Dorsolateral prefrontal cortex (tissue), 120 donors: ENCODE measurements at regions of chr19 and their contacts with region 1.

Region 1: DNA sequence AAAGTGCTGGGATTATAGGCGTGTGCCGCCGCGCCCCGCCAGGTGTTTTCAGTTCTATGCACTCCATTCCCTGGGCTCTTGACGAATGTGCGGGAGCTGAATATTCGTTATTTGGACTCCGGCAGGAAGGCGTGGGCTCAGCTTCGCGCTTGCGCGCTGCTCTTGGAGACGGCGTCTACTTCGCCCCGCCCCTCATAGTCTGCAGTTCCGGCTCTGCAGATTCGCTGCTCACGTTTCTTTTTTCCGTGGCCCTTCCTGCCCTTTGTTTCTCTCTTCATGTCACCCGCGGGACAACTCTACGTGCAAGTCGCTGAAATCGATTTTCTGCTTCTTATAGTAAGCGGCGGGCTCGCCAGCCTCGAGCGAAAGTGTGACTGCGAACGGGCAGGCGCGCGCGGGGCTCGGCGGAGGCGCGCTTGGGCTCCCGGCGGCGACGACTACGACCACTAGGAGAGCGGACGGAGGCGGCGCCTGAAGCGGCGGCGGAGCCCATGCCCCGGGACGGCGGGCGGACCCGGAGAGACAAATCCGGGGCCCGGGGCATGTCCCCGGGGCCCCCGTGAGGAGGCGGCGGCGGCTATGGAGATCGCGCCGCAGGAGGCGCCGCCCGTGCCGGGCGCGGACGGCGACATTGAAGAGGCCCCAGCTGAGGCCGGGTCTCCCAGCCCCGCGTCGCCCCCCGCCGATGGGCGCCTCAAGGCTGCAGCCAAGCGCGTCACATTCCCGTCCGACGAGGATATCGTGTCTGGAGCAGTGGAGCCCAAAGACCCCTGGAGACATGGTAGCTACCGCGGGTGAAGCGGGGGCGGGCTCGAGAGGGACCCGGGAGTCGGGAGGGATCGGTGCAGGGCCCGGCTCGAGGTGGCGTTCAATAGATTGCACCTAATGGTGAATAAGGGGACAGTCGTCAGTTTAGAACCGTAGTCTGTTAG is at the start of gene PPP1R37:
- DNase-seq: peak; percentile 89 to 95 (median 92)
- H3K4me3 ChIP-seq: peak within 1 kb of the TSS; percentile 70 to 100 (median 98)
- H3K27ac ChIP-seq: peak within 1 kb of the TSS; percentile 75 to 99 (median 93)
- H3K27me3 ChIP-seq: no peaks in the 10 kb centered on the region
- CTCF ChIP-seq: peak in 46 of 56 donors; percentile 14 to 66 (median 38)
- total RNA-seq, gene PPP1R37: 33.6 to 77.3 (median 54.0) TPM

Region 2: GRCh38 chr19:44890366-44891015 is 202.5 kb before region 1 on chr19:
- intact Hi-C with region 1: loop called in 1 of 2 experiments (anchors 2 kb)
- DNase-seq: peak in 7 of 10 donors; percentile 99 to 100 (median 100)
- H3K4me3 ChIP-seq: peak overlapping the region; percentile 51 to 99 (median 74)
- H3K27ac ChIP-seq: peak overlapping the region; percentile 58 to 99 (median 93)
- H3K27me3 ChIP-seq: no peaks in the 10 kb centered on the region
- CTCF ChIP-seq: peak in 20 of 56 donors; percentile 7 to 42 (median 24)

Region 3: GRCh38 chr19:45125926-45126493 is 33.0 kb after region 1 on chr19:
- intact Hi-C with region 1: loop called (anchors 2 to 5 kb)
- DNase-seq: peak in 8 of 10 donors; percentile 33 to 67 (median 52)
- H3K4me3 ChIP-seq: no peak overlapping the region
- H3K27ac ChIP-seq: peak overlapping the region in 2 of 59 donors; percentile 40
- H3K27me3 ChIP-seq: no peaks in the 10 kb centered on the region
- CTCF ChIP-seq: peak in 54 of 56 donors; percentile 33 to 75 (median 62)

Region 4: DNA sequence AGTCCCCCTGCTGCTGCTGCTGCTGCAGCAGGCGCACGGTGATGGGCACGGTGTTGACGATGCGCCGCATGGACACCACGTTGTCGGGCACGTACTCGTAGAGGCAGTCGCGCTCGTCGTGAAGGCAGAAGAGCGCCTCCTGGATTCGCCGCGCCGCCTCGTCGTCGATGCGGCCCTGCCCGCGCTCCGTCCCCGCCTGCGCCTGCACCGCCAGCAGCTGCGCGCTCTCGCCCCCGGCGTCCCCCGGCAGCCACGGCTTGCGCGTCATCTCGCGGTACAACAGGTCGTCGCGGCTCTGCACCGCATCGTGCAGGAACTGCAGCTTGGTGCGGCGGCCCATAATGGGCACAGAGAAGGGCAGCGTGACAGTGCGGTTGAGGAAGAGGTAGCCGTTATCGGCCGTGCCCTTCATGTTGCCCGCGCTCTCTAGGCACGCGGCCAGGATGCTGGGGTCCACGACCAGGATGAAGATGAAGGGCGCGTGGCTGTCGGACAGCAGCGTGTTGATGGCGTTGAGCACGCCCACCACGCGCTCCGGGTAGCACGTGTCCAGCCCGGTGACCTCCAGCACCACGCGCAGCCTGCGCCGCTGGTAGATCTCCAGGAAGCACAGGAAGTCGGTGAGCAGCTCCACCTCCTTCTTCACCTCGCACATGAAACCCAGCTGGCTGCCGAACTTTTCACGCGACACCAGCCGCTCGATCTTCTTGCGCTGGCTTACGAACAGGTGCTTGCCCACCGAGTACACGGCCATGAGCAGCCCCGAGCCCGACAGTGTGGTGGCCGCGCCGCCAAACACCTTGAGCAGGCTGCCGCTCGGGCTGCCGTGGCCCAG is 59.7 kb after region 1 on chr19:
- intact Hi-C with region 1: loop called in 1 of 2 experiments (anchors 10 kb)
- DNase-seq: peak in 7 of 10 donors; percentile 25 to 74 (median 39)
- H3K4me3 ChIP-seq: peak overlapping the region; percentile 12 to 65 (median 47)
- H3K27ac ChIP-seq: peak overlapping the region in 40 of 59 donors; percentile 5 to 74 (median 44)
- H3K27me3 ChIP-seq: peaks cover 0 to 14% (median 0%) of the 10 kb centered on the region in 45 donors
- CTCF ChIP-seq: peak in 17 of 56 donors; percentile 7 to 45 (median 18)

Region 5: GRCh38 chr19:45245334-45245787 is 152.3 kb after region 1 on chr19 and contains the start of gene EXOC3L2:
- intact Hi-C with region 1: loop called (anchors 5 kb)
- DNase-seq: no peak
- H3K4me3 ChIP-seq: no peak within 1 kb of the TSS
- H3K27ac ChIP-seq: no peak within 1 kb of the TSS
- H3K27me3 ChIP-seq: no peaks in the 10 kb centered on the region
- CTCF ChIP-seq: no peak
- total RNA-seq, gene EXOC3L2: 0.15 to 0.67 (median 0.22) TPM in 22 of 120 experiments, not detected in the others